MCF 10A (cell line): ENCODE measurements at regions of chr3 and their contacts with region 1.

Region 1: GRCh38 chr3:33074217-33075067 is 22.5 kb downstream of the GLB1 start:
- DNase-seq: peak; percentile 71
- H3K4me3 Mint-ChIP-seq: no peak overlapping the region
- H3K27ac Mint-ChIP-seq: no peak overlapping the region
- H3K4me1 Mint-ChIP-seq: peaks cover 4% of the 10 kb centered on the region
- H3K27me3 Mint-ChIP-seq: no peaks in the 10 kb centered on the region
- CTCF ChIP-seq: peak; percentile 81

Region 2: GRCh38 chr3:32947789-32948238 is 126.6 kb before region 1 on chr3:
- CTCF ChIA-PET with region 1: interaction called, 86 read pairs
- POLR2A ChIA-PET with region 1: no interaction called
- intact Hi-C with region 1: loop called (anchors 1 kb)
- DNase-seq: peak; percentile 91
- H3K4me3 Mint-ChIP-seq: no peak overlapping the region
- H3K27ac Mint-ChIP-seq: no peak overlapping the region
- H3K4me1 Mint-ChIP-seq: no peaks in the 10 kb centered on the region
- H3K27me3 Mint-ChIP-seq: no peaks in the 10 kb centered on the region
- CTCF ChIP-seq: peak; percentile 61

Region 3: GRCh38 chr3:32989171-32989570 is 85.3 kb before region 1 on chr3:
- CTCF ChIA-PET with region 1: interaction called, 10 read pairs
- POLR2A ChIA-PET with region 1: no interaction called
- intact Hi-C with region 1: no loop called
- DNase-seq: no peak
- H3K4me3 Mint-ChIP-seq: no peak overlapping the region
- H3K27ac Mint-ChIP-seq: no peak overlapping the region
- H3K4me1 Mint-ChIP-seq: no peaks in the 10 kb centered on the region
- H3K27me3 Mint-ChIP-seq: no peaks in the 10 kb centered on the region
- CTCF ChIP-seq: no peak

Region 4: GRCh38 chr3:33061782-33062181 is 12.7 kb before region 1 on chr3:
- CTCF ChIA-PET with region 1: interaction called, 21 read pairs
- POLR2A ChIA-PET with region 1: interaction called, 3 read pairs
- intact Hi-C with region 1: no loop called
- DNase-seq: no peak
- H3K4me3 Mint-ChIP-seq: no peak overlapping the region
- H3K27ac Mint-ChIP-seq: no peak overlapping the region
- H3K4me1 Mint-ChIP-seq: no peaks in the 10 kb centered on the region
- H3K27me3 Mint-ChIP-seq: no peaks in the 10 kb centered on the region
- CTCF ChIP-seq: no peak

Region 5: DNA sequence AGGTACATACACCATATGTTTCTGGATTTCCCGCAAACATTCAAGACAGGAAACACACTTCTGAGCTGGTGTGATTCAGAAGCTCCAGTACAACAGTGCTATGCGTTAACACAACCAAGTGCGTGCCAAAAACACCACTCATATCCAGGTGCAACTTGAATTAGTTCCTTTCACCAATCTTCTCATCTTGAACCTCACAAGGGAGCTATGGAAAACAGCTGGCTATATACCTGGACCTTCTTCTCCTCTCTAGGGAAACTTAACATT is 112.9 kb after region 1 on chr3:
- CTCF ChIA-PET with region 1: no interaction called
- POLR2A ChIA-PET with region 1: no interaction called
- intact Hi-C with region 1: no loop called
- DNase-seq: no peak
- H3K4me3 Mint-ChIP-seq: no peak overlapping the region
- H3K27ac Mint-ChIP-seq: no peak overlapping the region
- H3K4me1 Mint-ChIP-seq: no peaks in the 10 kb centered on the region
- H3K27me3 Mint-ChIP-seq: no peaks in the 10 kb centered on the region
- CTCF ChIP-seq: no peak

Region 6: GRCh38 chr3:33260104-33260503 is 185.7 kb after region 1 on chr3:
- CTCF ChIA-PET with region 1: no interaction called
- POLR2A ChIA-PET with region 1: no interaction called
- intact Hi-C with region 1: no loop called
- DNase-seq: no peak
- H3K4me3 Mint-ChIP-seq: no peak overlapping the region
- H3K27ac Mint-ChIP-seq: no peak overlapping the region
- H3K4me1 Mint-ChIP-seq: no peaks in the 10 kb centered on the region
- H3K27me3 Mint-ChIP-seq: no peaks in the 10 kb centered on the region
- CTCF ChIP-seq: no peak